Sigmoid colon (tissue), 7 donors: ENCODE measurements at regions of chr3 and their contacts with region 1.

Region 1: GRCh38 chr3:119098619-119099222 is 47.2 kb upstream of the TEX55 start:
- DNase-seq: no peak
- H3K4me3 ChIP-seq: no peak overlapping the region
- H3K27ac ChIP-seq: no peak overlapping the region
- H3K4me1 ChIP-seq: no peaks in the 10 kb centered on the region
- H3K27me3 ChIP-seq: no peaks in the 10 kb centered on the region
- CTCF ChIP-seq: peak; percentile 36 to 63 (median 40)
- EP300 ChIP-seq: no peak
- POLR2A ChIP-seq: no peak

Region 2: GRCh38 chr3:118884748-118885206 is 213.9 kb before region 1 on chr3:
- intact Hi-C with region 1: loop called (anchors 1 kb)
- DNase-seq: no peak
- H3K4me3 ChIP-seq: no peak overlapping the region
- H3K27ac ChIP-seq: no peak overlapping the region
- H3K4me1 ChIP-seq: no peaks in the 10 kb centered on the region
- H3K27me3 ChIP-seq: no peaks in the 10 kb centered on the region
- CTCF ChIP-seq: peak; percentile 69 to 87 (median 84)
- EP300 ChIP-seq: no peak
- POLR2A ChIP-seq: no peak

Region 3: GRCh38 chr3:119149484-119149883 is 50.8 kb after region 1 on chr3:
- intact Hi-C with region 1: no loop called
- DNase-seq: no peak
- H3K4me3 ChIP-seq: no peak overlapping the region
- H3K27ac ChIP-seq: no peak overlapping the region
- H3K4me1 ChIP-seq: no peaks in the 10 kb centered on the region
- H3K27me3 ChIP-seq: no peaks in the 10 kb centered on the region
- CTCF ChIP-seq: no peak
- EP300 ChIP-seq: no peak
- POLR2A ChIP-seq: no peak

Region 4: GRCh38 chr3:119161240-119161639 is 62.5 kb after region 1 on chr3:
- intact Hi-C with region 1: no loop called
- DNase-seq: no peak
- H3K4me3 ChIP-seq: no peak overlapping the region
- H3K27ac ChIP-seq: no peak overlapping the region
- H3K4me1 ChIP-seq: no peaks in the 10 kb centered on the region
- H3K27me3 ChIP-seq: no peaks in the 10 kb centered on the region
- CTCF ChIP-seq: no peak
- EP300 ChIP-seq: no peak
- POLR2A ChIP-seq: no peak